HEK293T (cell line): ENCODE measurements at regions of chr7 and their contacts with region 1.

Region 1: GRCh38 chr7:156949541-156950380 is at the start of gene NOM1:
- DNase-seq: peak; percentile 99

Region 2: DNA sequence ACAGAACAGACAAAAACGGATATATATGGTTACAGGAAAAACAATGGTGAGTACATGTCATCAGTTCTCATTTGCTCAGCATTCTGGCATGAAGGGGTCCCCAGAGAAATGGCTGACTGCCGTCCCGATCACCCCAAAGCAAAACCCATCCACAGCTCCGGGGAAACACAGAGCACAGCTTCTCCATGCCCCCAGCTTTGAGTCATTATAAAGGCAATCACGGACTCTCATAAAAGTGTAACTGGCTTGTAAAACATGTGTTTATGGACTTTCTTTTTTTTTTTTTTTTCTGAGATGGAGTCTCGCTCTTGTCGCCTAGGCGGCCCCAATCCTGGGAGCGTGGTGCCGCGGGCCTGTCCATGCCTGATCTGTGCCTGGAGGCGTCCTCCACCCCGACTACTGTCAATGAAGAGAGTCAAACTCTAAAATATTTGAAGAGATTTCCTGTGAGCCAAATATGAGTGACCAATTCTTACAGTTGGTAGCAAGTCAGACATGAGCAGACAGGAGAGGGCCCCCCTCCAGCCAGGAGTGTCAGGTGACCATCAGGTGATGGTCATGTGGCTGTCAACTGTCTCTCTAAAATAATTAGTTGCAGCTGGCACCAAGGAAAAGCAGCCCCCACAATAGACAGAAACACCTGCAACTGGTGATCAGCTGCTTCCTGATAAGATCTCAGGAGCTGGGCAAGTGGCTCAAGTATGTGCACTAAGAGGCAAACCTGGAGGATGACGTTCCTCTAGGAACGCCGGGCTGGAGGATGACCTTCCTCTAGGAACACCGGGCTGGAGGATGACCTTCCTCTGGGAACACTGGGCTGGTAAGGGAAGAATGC is 22.0 kb before region 1 on chr7:
- CTCF ChIA-PET with region 1: interaction called, 5 read pairs
- POLR2A ChIA-PET with region 1: interaction called, 11 read pairs
- DNase-seq: no peak

Region 3: GRCh38 chr7:156979007-156979606 is 29.3 kb after region 1 on chr7:
- CTCF ChIA-PET with region 1: no interaction called
- POLR2A ChIA-PET with region 1: no interaction called
- DNase-seq: no peak